ENCODE measurements at regions of chr2 and their contacts with region 1.

Region 1: DNA sequence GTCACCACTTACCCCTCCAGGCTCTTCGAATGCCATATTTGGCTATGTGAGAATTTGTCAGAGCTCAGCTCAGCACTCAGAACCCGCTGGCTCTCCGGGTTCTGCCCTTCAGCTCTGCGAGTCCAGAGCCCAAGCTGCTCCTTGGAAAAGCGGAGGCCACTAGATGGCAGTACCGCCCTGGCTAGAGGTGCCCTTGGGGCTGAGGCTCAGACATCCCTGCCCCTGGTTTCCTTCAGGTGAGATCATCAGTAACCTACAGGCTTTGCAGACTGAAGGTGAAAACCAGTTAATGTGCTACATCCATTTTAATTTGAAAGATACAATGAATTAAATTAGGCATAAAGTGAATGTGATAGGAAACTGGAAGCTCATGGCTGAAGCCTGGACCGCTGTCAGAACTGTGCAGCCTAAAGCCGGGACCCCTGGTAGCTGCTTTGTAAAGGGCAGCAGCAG is 285.6 kb downstream of the AGAP1 start:
- DNase-seq: peak; percentile 60
- H3K4me3 ChIP-seq: no peak overlapping the region
- H3K27ac ChIP-seq: no peak overlapping the region
- H3K4me1 ChIP-seq: no peaks in the 10 kb centered on the region
- H3K27me3 ChIP-seq: no peaks in the 10 kb centered on the region
- CTCF ChIP-seq: peak; percentile 19 to 82 (median 76)
- POLR2A ChIP-seq: no peak

Region 2: DNA sequence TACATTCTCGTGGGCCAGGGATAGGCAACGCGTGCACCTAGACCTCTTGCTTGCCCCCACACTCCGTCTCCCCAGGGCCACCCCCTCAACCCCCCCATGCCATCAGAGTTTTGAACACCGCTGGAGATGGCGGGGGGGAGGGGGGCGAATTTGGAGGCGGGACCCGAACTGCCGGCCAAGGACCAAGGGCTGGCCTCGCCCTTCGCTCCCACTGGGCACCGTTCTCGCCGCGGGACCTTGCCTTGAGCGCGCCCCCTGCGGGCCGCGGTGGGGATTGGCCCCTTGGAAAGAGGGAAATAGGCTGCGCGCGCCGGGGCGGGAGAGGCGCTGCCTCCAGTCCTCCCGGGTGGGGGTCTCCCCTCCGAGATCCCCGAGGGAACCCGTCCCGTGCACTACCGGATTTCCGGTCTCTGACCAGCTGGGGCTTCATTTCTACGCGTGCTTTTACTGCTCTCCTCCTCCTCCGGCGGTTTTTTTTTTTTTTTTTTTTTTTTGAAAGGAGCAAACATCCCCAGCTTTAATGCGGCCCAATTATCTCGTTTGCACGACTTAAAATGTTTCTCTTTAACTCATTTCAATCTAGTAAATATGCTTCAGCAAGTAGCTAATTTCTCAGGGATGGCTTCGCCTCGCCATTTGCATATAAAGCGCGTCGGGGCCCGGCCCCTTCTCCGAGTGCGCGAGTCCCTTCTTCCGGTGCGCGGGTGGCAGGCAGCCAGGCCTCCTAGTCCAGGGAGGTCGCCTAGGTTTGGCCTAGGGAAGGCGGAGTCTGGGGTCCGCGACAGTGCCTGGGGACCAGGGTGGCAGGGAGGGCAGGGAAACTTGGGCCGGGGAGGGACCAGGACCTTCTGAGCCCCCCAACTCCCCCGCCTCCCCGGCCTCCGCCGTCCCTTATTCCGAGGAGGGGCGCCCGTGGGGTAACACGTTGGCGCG is 398.8 kb after region 1 on chr2:
- intact Hi-C with region 1: loop called (anchors 5 kb)
- DNase-seq: no peak
- H3K4me3 ChIP-seq: peak overlapping the region in 1 of 2 donors; percentile 10
- H3K27ac ChIP-seq: no peak overlapping the region
- H3K4me1 ChIP-seq: no peaks in the 10 kb centered on the region
- H3K27me3 ChIP-seq: peaks cover 48% of the 10 kb centered on the region
- CTCF ChIP-seq: peak; percentile 46 to 68 (median 54)
- POLR2A ChIP-seq: no peak

Region 3: GRCh38 chr2:236343400-236344161 is 564.1 kb after region 1 on chr2:
- intact Hi-C with region 1: loop called (anchors 10 kb)
- DNase-seq: peak; percentile 54
- H3K4me3 ChIP-seq: no peak overlapping the region
- H3K27ac ChIP-seq: no peak overlapping the region
- H3K4me1 ChIP-seq: no peaks in the 10 kb centered on the region
- H3K27me3 ChIP-seq: no peaks in the 10 kb centered on the region
- CTCF ChIP-seq: peak in 3 of 4 experiments; percentile 70 to 80 (median 78)
- POLR2A ChIP-seq: no peak